WTC11 (cell line): ENCODE measurements at regions of chr1 and their contacts with region 1.

Region 1: GRCh38 chr1:27300341-27301051 is 21.5 kb upstream of the TMEM222 start:
- DNase-seq: peak; percentile 82
- ATAC-seq: peak; percentile 79
- H3K4me3 Mint-ChIP-seq: no peak overlapping the region
- H3K27ac Mint-ChIP-seq: peak overlapping the region; percentile 48; the same call in 1 of the 2 replicates
- H3K4me1 Mint-ChIP-seq: peaks cover 25% of the 10 kb centered on the region
- H3K27me3 Mint-ChIP-seq: no peaks in the 10 kb centered on the region
- CTCF ChIP-seq: peak; percentile 100

Region 2: GRCh38 chr1:27097484-27097917 is 203.0 kb before region 1 on chr1:
- CTCF ChIA-PET with region 1: interaction called, 41 read pairs
- POLR2A ChIA-PET with region 1: no interaction called
- DNase-seq: peak; percentile 84
- ATAC-seq: peak; percentile 68
- H3K4me3 Mint-ChIP-seq: no peak overlapping the region
- H3K27ac Mint-ChIP-seq: no peak overlapping the region
- H3K4me1 Mint-ChIP-seq: peaks cover 27% of the 10 kb centered on the region
- H3K27me3 Mint-ChIP-seq: no peaks in the 10 kb centered on the region; the same call in 1 of the 2 replicates
- CTCF ChIP-seq: peak; percentile 99

Region 3: DNA sequence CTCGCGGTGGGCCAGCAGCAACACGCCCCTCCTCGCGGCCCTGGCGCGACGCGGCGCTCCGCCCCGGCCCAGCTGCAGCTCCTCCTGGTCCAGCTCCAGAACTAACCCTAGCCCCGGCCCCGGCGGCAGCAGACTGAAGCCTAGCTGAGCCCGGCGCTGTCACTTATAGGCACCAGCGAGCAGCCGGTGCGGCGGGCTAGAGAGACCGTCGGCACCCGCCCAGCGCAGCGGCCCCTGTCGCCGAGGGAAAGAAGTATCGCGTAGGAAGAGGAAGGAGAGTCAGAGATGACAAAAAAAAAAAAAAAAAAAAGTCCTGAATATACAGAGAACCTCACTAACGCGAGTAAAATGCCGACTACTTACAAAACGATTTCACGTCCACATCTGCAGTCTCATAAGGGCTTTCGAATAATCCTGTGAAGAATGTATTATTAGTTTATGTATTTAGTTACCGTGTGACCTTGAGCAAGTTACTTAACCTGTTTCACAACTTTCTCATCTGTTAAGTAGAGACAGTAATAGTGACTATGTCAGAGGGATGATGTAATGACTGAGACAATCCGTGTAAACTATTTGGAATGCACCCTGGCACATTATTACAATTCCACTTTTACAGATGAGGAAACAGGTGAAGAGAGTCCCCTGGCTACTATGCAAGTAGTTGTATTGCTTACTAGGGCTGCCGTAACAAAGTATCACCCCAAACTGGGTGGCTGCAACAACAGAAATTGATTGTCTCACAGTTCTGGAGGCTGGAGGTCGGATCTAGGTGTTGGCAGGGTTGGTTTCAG is 145.3 kb before region 1 on chr1 and contains the start of gene SLC9A1:
- CTCF ChIA-PET with region 1: interaction called, 11 read pairs
- POLR2A ChIA-PET with region 1: no interaction called
- DNase-seq: peak; percentile 93
- ATAC-seq: peak; percentile 97
- H3K4me3 Mint-ChIP-seq: peak within 1 kb of the TSS; percentile 92
- H3K27ac Mint-ChIP-seq: peak within 1 kb of the TSS; percentile 78
- H3K4me1 Mint-ChIP-seq: peaks cover 26% of the 10 kb centered on the region
- H3K27me3 Mint-ChIP-seq: no peaks in the 10 kb centered on the region
- CTCF ChIP-seq: no peak
- total RNA-seq, gene SLC9A1: 22.0 to 25.1 TPM (median 22.5 TPM) in 3 replicates

Region 4: DNA sequence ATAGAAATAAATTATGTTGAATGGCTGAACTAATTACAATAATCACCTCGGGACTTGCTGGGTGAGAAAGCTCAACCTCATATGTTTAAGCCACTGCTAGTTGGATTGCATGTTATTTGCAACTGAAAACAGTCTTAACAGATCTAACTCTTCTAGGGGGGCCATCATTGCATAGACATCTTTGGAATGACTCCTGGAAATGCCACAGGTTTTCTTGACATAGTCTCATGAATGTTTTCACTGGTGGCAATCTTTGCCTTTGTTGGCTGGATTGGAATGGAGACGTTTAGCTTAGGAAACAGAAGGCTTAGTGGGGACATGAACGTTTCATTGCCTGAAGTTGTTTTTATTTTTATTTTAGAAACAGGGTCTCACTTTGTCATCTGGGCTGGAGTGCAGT is 74.9 kb before region 1 on chr1:
- CTCF ChIA-PET with region 1: no interaction called
- POLR2A ChIA-PET with region 1: no interaction called
- DNase-seq: no peak
- ATAC-seq: no peak
- H3K4me3 Mint-ChIP-seq: no peak overlapping the region
- H3K27ac Mint-ChIP-seq: no peak overlapping the region
- H3K4me1 Mint-ChIP-seq: no peaks in the 10 kb centered on the region
- H3K27me3 Mint-ChIP-seq: no peaks in the 10 kb centered on the region
- CTCF ChIP-seq: no peak

Region 5: GRCh38 chr1:27316860-27317259 is 16.4 kb after region 1 on chr1:
- CTCF ChIA-PET with region 1: interaction called, 124 read pairs
- POLR2A ChIA-PET with region 1: no interaction called
- DNase-seq: no peak
- ATAC-seq: no peak
- H3K4me3 Mint-ChIP-seq: no peak overlapping the region
- H3K27ac Mint-ChIP-seq: no peak overlapping the region
- H3K4me1 Mint-ChIP-seq: peaks cover 10% of the 10 kb centered on the region
- H3K27me3 Mint-ChIP-seq: peaks cover 15% of the 10 kb centered on the region
- CTCF ChIP-seq: no peak

Region 6: GRCh38 chr1:27349784-27350662 is 49.5 kb after region 1 on chr1:
- CTCF ChIA-PET with region 1: interaction called, 100 read pairs
- POLR2A ChIA-PET with region 1: interaction called, 7 read pairs
- DNase-seq: peak; percentile 80
- ATAC-seq: peak; percentile 41
- H3K4me3 Mint-ChIP-seq: peak overlapping the region; percentile 75
- H3K27ac Mint-ChIP-seq: no peak overlapping the region
- H3K4me1 Mint-ChIP-seq: peaks cover 18% of the 10 kb centered on the region
- H3K27me3 Mint-ChIP-seq: peaks cover 12% of the 10 kb centered on the region
- CTCF ChIP-seq: no peak

Region 7: DNA sequence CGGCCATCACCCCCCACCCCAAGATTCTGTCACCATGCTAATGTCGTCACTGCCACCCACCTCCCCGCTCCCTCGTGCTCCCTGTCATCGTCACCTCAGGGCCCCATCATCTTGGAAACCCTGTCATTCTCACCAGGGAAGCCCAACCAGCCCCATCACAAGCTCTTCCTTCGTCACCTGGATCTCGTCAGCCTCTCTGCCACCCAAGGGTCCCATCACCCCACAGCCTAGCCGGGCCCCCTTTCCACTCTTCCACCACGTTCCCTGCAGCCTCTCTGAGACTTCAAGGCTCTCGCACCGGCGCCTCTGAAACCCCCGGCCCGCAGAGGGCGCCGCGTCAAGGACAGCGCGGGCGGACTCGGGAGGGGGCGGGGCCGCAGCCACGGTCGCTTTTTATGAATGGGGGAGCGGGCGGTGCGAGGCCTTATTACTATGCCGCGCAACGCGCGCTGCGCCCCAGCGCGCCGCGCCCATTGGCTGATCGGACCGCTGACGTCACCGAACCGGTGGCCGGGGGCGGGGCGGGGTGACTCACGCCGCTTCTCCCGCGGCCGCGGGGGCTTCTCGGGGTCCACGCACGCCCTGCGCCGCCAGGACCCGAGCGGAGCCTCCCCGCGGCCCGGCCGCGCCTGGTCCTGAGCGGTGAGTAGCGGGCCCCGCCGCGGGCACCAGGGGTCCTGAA is 91.7 kb after region 1 on chr1 and contains the start of gene GPR3:
- CTCF ChIA-PET with region 1: interaction called, 260 read pairs
- POLR2A ChIA-PET with region 1: no interaction called
- DNase-seq: peak; percentile 96
- ATAC-seq: peak; percentile 72
- H3K4me3 Mint-ChIP-seq: peak within 1 kb of the TSS; percentile 91
- H3K27ac Mint-ChIP-seq: peak within 1 kb of the TSS; percentile 95
- H3K4me1 Mint-ChIP-seq: peaks cover 24% of the 10 kb centered on the region
- H3K27me3 Mint-ChIP-seq: peaks cover 4% of the 10 kb centered on the region
- CTCF ChIP-seq: peak; percentile 20; the same call in 1 of the 2 replicates
- total RNA-seq, gene GPR3: 7.8 to 12.4 TPM (median 7.8 TPM) in 3 replicates

Region 8: DNA sequence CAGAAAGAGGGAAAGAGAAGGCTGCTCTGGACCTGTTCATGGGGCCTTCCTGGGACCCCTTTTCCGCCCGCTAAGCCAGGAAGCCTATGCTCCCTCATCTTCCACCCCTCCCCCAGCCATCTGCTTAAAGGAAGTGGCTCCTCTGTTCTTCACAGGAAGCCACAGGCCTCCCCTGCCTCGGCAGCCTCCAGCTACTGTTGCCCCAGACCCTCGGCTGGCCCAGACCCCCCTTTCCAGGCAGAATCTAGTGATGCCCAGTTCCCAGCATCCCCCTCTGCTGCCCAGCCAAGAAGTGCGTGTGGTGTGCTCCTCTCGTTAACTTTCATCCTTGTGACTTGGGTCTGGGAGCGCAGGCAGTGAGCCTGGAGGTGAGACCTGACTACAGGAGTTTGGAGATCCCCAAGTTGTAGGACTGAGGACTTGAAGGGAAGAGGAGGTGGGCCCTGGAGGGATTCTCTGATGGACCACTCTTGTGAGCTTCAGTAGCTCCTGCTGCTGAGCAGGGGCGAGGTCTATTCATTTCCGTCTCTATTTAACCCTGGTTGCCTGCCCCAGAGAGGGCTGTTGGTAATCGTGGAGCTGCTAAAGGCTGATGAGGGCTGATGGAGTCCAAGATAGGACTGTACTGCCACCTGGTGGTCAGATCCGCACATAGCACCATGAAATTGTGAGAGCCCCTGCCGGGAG is 362.4 kb after region 1 on chr1:
- CTCF ChIA-PET with region 1: interaction called, 20 read pairs
- POLR2A ChIA-PET with region 1: no interaction called
- DNase-seq: peak; percentile 95
- ATAC-seq: peak; percentile 81
- H3K4me3 Mint-ChIP-seq: no peak overlapping the region
- H3K27ac Mint-ChIP-seq: peak overlapping the region; percentile 75
- H3K4me1 Mint-ChIP-seq: peaks cover 29% of the 10 kb centered on the region
- H3K27me3 Mint-ChIP-seq: peaks cover 3% of the 10 kb centered on the region; the same call in 1 of the 2 replicates
- CTCF ChIP-seq: peak; percentile 91

Region 9: GRCh38 chr1:27760426-27760825 is 459.9 kb after region 1 on chr1:
- CTCF ChIA-PET with region 1: no interaction called
- POLR2A ChIA-PET with region 1: no interaction called
- DNase-seq: no peak
- ATAC-seq: no peak
- H3K4me3 Mint-ChIP-seq: no peak overlapping the region
- H3K27ac Mint-ChIP-seq: no peak overlapping the region
- H3K4me1 Mint-ChIP-seq: no peaks in the 10 kb centered on the region
- H3K27me3 Mint-ChIP-seq: no peaks in the 10 kb centered on the region
- CTCF ChIP-seq: no peak